GM10248 (cell line): ENCODE measurements at regions of chr3 and their contacts with region 1.

Region 1: GRCh38 chr3:32143849-32144757 is 37.7 kb downstream of the GPD1L start:
- DNase-seq: peak; percentile 58
- CTCF ChIP-seq: peak; percentile 55

Region 2: DNA sequence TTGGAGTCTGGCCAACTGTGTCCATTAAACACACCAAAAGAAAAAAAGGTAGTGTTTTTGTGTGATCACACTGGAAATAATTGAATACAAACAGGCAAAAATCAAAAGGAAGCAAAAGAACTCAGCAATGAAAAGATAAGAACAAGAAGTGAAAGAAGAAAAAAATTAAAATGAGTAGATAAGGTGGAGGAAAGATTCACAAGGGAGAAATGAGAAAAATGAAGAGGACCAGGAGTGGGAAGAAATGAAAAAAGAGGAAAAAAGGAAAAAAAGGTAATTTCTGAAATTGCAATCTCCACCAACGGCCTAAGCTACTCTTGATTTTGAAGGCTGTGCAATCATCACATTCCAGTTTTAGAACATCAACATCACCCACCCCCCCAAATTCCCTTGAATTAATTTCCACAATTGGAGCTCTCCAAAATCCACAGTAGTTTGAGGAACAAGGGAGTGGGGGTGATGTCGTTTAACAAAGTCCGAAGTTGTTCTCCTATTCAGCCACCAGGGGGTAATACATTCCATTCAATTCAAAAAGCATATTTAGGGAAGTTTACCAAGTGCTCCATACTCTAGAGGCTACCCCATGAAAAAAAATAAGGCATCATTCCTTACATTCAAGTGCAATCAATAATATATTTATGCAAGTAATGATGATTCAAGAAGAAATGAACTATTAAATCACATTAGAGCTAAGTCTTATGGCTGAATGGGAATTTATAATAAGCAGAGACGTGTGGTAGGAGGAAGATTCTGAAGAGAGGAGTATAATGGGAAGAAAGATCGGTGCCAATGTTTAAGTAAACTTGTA is 125.1 kb before region 1 on chr3:
- CTCF ChIA-PET with region 1: interaction called, 22 read pairs
- POLR2A ChIA-PET with region 1: interaction called, 4 read pairs
- DNase-seq: peak; percentile 42
- CTCF ChIP-seq: peak; percentile 53

Region 3: GRCh38 chr3:32132121-32132520 is 12.0 kb before region 1 on chr3:
- CTCF ChIA-PET with region 1: interaction called, 10 read pairs
- POLR2A ChIA-PET with region 1: no interaction called
- DNase-seq: no peak
- CTCF ChIP-seq: no peak

Region 4: DNA sequence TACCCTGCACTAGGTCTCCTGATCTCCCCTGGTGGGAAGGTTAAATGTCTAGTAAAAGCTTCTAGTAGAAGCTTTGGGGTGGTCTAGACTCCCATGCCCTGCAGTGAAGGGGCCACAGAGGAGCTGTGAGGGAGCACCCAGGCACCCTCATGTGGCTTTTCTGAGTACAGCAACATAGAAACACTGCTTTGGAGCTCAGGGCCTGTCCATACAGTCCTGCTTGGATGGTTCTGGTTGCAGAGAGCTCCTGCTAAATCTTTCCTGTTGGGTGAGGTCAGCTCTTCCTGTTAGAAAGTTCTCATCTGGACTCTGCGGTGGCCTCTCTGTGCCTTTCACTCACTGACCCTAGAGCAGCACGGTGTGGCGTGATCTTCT is 10.1 kb after region 1 on chr3:
- CTCF ChIA-PET with region 1: interaction called, 20 read pairs
- POLR2A ChIA-PET with region 1: no interaction called
- DNase-seq: no peak
- CTCF ChIP-seq: peak; percentile 21